ENCODE measurements at regions of chr3 and their contacts with region 1.

Region 1: DNA sequence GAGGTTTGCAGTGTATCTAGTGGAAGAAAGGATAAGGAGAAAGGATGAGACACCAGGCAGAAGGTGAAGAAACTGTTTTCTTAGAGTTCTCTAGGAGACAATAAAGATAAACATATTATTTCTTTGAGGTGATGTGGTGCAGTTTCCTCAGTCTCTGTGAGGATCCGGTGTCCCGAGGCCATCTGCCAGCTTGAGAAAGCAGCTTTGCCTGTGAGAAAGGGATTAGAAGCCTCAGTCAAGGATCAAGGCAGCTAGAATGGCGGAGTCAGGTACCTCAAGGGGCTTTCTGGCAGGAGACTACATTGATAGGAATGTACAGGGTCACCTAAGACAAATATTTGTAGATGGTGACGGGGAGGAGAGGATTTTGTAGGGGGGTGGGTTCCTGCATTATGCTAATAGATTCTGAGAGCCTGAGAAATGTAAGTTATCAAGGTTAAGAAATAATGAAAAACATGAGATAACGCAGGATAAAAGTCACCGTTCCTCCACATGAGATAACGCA is 103.9 kb upstream of the MB21D2 start:
- DNase-seq: peak; percentile 74 to 86
- H3K4me3 ChIP-seq: no peak overlapping the region
- H3K4me3 Mint-ChIP-seq: peak overlapping the region; percentile 0
- H3K27ac Mint-ChIP-seq: peak overlapping the region; percentile 25
- H3K4me1 ChIP-seq: peaks cover 22% of the 10 kb centered on the region
- H3K4me1 Mint-ChIP-seq: peaks cover 16% of the 10 kb centered on the region
- H3K27me3 ChIP-seq: no peaks in the 10 kb centered on the region
- H3K27me3 Mint-ChIP-seq: no peaks in the 10 kb centered on the region
- CTCF ChIP-seq: no peak

Region 2: DNA sequence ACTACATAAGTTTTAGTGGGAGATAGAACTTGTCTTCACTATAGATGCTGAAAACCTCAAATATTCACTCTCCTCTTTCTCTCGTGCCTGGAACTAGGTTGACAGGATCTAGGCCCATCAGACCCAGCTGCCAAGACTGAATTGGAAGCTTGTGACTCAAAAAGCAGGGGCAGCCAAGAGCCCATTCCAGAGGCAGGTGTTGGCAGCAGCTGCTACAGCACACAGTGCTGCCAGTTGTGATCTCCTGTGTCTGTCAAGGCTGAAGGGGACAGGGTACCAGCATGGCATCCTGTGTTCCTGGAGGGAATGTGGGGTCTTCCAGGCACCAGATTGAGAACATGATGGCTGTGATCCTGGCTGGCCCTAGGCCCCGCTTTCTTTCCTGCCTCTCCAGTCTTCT is 11.4 kb before region 1 on chr3:
- CTCF ChIA-PET with region 1: no interaction called
- POLR2A ChIA-PET with region 1: no interaction called
- intact Hi-C with region 1: loop called (anchors 1 kb)
- DNase-seq: no peak
- H3K4me3 ChIP-seq: no peak overlapping the region
- H3K4me3 Mint-ChIP-seq: no peak overlapping the region
- H3K27ac Mint-ChIP-seq: peak overlapping the region; percentile 55
- H3K4me1 ChIP-seq: peaks cover 15% of the 10 kb centered on the region
- H3K4me1 Mint-ChIP-seq: peaks cover 28% of the 10 kb centered on the region
- H3K27me3 ChIP-seq: no peaks in the 10 kb centered on the region
- H3K27me3 Mint-ChIP-seq: no peaks in the 10 kb centered on the region
- CTCF ChIP-seq: no peak

Measured in Caco-2 (cell line).